PC-3 (cell line): ENCODE measurements at regions of chr11 and their contacts with region 1.

Region 1: GRCh38 chr11:36131721-36132397 is 157.4 kb downstream of the COMMD9 start:
- DNase-seq: peak; percentile 29
- ATAC-seq: peak; percentile 69
- H3K4me3 ChIP-seq: no peak overlapping the region
- H3K27ac ChIP-seq: no peak overlapping the region
- H3K4me1 ChIP-seq: peaks cover 11% of the 10 kb centered on the region
- H3K27me3 ChIP-seq: no peaks in the 10 kb centered on the region
- CTCF ChIP-seq: peak; percentile 68

Region 2: GRCh38 chr11:35714882-35715627 is 416.8 kb before region 1 on chr11:
- CTCF ChIA-PET with region 1: no interaction called
- POLR2A ChIA-PET with region 1: no interaction called
- intact Hi-C with region 1: loop called (anchors 10 kb)
- DNase-seq: peak; percentile 26
- ATAC-seq: peak; percentile 55
- H3K4me3 ChIP-seq: no peak overlapping the region
- H3K27ac ChIP-seq: no peak overlapping the region
- H3K4me1 ChIP-seq: no peaks in the 10 kb centered on the region
- H3K27me3 ChIP-seq: no peaks in the 10 kb centered on the region
- CTCF ChIP-seq: no peak

Region 3: GRCh38 chr11:36149538-36150242 is 17.8 kb after region 1 on chr11:
- CTCF ChIA-PET with region 1: interaction called, 10 read pairs
- POLR2A ChIA-PET with region 1: no interaction called
- intact Hi-C with region 1: no loop called
- DNase-seq: peak; percentile 99
- ATAC-seq: peak; percentile 96
- H3K4me3 ChIP-seq: peak overlapping the region; percentile 10; the same call in 1 of the 2 replicates
- H3K27ac ChIP-seq: peak overlapping the region; percentile 70
- H3K4me1 ChIP-seq: peaks cover 29% of the 10 kb centered on the region
- H3K27me3 ChIP-seq: no peaks in the 10 kb centered on the region
- CTCF ChIP-seq: peak; percentile 79